Panc1 (cell line): ENCODE measurements at regions of chrX and their contacts with region 1.

Region 1: DNA sequence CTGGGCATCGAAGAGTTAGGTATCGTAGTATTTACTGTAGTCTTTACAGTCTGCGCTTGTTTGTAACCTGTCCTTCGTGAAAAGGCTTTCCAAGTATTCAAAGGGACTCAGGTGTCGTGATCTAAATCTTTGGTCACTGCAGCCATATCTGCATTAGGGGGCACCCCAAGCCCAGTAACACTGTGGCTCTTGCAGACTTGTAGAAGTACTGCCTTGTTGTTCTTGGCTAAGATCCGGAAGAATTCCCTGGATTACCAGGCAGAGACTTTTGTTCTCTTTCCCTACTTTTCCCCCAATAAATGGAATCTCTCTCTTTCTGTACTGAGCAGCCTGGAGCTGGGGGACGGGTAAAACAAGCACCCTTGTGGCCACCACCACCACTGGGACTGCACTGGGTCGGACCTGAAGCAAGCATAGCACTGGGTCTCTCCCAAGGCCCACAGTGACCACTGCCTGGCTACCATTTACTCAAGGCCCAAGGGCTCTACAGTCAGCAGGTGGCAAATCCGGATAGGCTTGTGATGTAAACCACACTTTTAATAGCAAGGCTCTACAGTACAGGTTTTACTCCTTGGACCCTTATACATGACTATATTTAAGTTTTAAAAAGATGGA is 12.0 kb downstream of the CXorf58 start:
- DNase-seq: no peak
- ATAC-seq: no peak
- H3K4me3 ChIP-seq: no peak overlapping the region
- H3K27ac ChIP-seq: no peak overlapping the region
- H3K4me1 ChIP-seq: no peaks in the 10 kb centered on the region
- H3K27me3 ChIP-seq: no peaks in the 10 kb centered on the region
- CTCF ChIP-seq: no peak

Region 2: GRCh38 chrX:23773601-23774175 is 146.1 kb before region 1 on chrX:
- CTCF ChIA-PET with region 1: no interaction called
- POLR2A ChIA-PET with region 1: no interaction called
- in situ Hi-C with region 1: no loop called
- intact Hi-C with region 1: no loop called
- DNase-seq: no peak
- ATAC-seq: no peak
- H3K4me3 ChIP-seq: no peak overlapping the region
- H3K27ac ChIP-seq: no peak overlapping the region
- H3K4me1 ChIP-seq: no peaks in the 10 kb centered on the region; the same call in 1 of the 2 replicates
- H3K27me3 ChIP-seq: no peaks in the 10 kb centered on the region
- CTCF ChIP-seq: no peak

Region 3: GRCh38 chrX:23845351-23845817 is 74.4 kb before region 1 on chrX:
- CTCF ChIA-PET with region 1: no interaction called
- POLR2A ChIA-PET with region 1: interaction called, 10 read pairs
- in situ Hi-C with region 1: no loop called
- intact Hi-C with region 1: no loop called
- DNase-seq: no peak
- ATAC-seq: no peak
- H3K4me3 ChIP-seq: no peak overlapping the region
- H3K27ac ChIP-seq: peak overlapping the region; percentile 48; the same call in 1 of the 2 replicates
- H3K4me1 ChIP-seq: peaks cover 19% of the 10 kb centered on the region
- H3K27me3 ChIP-seq: no peaks in the 10 kb centered on the region
- CTCF ChIP-seq: no peak

Region 4: DNA sequence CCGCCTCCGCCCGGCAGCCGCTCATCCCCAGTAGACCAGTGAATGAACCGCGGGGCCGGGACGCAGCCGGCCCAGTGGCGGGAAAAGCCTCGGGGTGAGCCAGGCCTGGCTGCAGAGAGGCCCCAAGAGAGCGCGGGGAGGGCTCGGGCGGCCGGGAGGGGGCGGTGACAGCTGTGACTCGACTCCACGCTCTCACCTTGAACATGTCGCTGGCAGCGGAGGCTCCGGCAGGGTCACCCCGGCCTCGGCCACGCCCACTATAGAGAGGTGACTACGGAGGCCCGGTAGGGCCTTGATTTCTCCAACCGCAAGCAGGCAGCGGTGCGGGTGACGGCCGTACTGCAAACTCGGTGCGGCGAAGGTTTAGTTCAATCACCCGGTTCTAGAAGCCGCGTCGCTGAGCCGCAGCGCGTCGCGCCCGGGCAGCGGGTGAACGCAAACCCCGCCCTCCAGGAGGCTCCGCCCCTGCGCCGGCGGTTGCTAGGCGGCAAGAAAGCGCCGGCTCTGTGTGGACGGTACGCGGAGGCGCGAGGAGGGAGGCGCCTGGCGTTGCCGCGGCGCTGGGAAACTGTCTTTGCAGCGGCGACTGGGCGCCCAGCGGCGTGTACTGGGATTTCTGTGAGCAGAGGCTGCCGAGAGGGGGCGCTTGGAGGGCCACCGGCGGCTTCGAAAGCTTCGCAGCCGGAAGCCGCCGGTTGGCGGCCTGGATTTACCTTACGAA is 12.2 kb before region 1 on chrX and contains the starts of genes APOO and CXorf58:
- CTCF ChIA-PET with region 1: no interaction called
- POLR2A ChIA-PET with region 1: no interaction called
- in situ Hi-C with region 1: no loop called
- intact Hi-C with region 1: no loop called
- DNase-seq: no peak
- ATAC-seq: peak; percentile 98
- H3K4me3 ChIP-seq: peak within 1 kb of the TSS; percentile 56 to 63
- H3K27ac ChIP-seq: peak within 1 kb of the TSS; percentile 84
- H3K4me1 ChIP-seq: peaks cover 3% of the 10 kb centered on the region
- H3K27me3 ChIP-seq: no peaks in the 10 kb centered on the region
- CTCF ChIP-seq: peak; percentile 87
- total RNA-seq, gene APOO: 36.8 TPM
- total RNA-seq, gene CXorf58: 0.41 TPM